ENCODE measurements at regions of chr21 and their contacts with region 1.

Region 1: GRCh38 chr21:29372063-29372802 is 73.5 kb downstream of the BACH1 start:
- DNase-seq: no peak
- ATAC-seq: peak; percentile 88

Region 2: DNA sequence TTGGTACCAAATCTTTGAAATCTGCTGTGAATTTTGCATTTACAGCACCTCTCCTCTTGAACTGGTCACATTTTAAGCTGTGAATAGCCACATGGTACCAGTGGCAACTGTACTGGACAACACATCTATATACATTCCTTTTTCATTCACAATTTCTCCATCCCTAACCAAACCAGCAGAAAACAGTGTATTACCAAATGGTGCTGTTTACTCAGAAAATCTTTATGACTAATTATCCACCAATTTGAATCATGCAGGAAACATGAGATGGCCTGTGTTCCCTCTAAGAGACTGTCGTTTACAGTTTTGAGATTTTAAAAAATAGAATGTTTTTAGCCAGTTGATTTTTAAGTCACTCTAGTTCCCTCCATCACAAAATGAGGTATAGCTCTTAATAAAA is 281.2 kb before region 1 on chr21:
- intact Hi-C with region 1: loop called (anchors 1 kb)
- DNase-seq: no peak
- ATAC-seq: no peak

Region 3: GRCh38 chr21:29130270-29130969 is 241.8 kb before region 1 on chr21 and contains the start of gene MAP3K7CL:
- intact Hi-C with region 1: no loop called
- DNase-seq: no peak
- ATAC-seq: peak; percentile 85
- total RNA-seq, gene MAP3K7CL: 1.1 TPM

Region 4: DNA sequence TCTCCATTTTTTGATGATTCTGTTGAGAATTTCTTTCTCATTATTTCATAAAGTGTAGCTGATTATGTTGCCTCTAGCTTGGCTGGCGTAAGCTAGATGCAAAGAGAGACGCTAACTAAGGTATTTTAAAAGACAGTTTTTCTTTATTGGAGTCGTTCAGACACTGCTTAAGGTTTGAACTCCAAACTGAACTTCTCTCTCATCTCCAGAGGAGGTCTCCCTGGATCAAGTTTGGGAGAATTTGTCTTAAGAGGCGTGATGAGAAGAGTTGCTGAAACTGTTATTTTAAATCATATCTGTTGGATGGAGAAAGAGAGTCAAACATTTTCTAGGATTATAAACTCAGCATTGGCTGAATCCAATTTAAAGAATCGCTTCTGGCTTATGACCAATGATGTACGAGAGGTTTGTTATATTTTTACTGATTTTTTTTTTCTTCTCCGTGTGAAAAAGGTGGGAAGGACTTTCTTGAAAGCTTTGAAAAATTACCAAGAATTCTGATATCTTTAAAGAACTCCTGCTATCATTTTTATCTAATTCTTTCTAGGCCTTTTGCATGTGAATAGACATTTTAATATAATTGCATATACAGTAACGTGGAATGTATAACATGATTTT is 207.8 kb before region 1 on chr21:
- intact Hi-C with region 1: loop called (anchors 2 kb)
- DNase-seq: no peak
- ATAC-seq: peak; percentile 56

Region 5: DNA sequence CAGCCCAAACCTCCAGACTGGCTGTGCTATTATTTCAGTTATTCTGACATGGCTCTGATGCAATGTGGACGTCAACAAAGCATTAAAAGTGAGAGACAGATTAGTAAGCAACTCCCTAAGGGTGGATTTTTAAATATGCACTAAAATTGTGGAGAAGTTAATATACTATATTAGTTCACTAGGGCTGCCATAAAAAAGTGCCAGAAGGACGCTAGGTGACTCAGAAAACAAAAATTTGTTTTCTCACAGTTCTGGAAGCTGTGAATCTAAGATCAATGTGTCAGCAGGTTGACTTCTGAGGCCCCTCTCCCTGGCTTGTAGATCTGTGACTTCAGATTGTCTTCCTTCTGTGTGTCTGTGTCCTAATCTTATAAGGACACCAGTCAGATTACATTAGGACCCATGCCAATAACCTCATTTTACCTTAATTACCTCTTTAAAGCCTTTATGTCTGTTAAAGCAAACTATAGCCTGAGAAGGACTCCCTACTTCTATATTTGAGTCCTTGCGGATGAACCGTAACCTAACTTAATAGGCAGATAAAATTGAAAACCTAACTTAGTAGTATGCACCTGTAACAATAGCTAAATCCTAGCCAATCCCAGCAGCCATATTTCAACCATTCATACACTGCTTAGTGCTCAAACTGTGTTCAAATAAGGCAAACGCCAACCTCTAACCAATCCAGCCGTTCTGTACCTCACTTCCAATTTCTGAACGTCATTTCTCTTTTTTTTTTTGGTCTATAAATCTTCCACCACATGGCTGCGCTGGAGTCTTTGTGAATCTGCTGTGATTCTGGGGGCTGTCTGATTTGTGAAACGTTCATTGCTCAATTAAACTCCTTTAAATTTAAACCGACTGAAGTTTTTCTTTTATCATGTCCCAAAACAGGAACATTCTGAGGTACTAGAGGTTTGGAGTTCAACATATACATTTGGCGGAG is 139.4 kb before region 1 on chr21:
- intact Hi-C with region 1: loop called (anchors 10 kb)
- DNase-seq: no peak
- ATAC-seq: no peak

Measured in Right ventricle myocardium inferior (tissue), 1 donor.